Astrocyte of the cerebellum (primary cell): ENCODE measurements at regions of chr7 and their contacts with region 1.

Region 1: GRCh38 chr7:108384721-108385481 is 71.3 kb downstream of the NRCAM start:
- DNase-seq: no peak
- H3K4me3 ChIP-seq: no peak overlapping the region
- CTCF ChIP-seq: peak; percentile 5

Region 2: GRCh38 chr7:108294595-108294994 is 90.3 kb before region 1 on chr7:
- in situ Hi-C with region 1: no loop called
- DNase-seq: no peak
- H3K4me3 ChIP-seq: no peak overlapping the region
- CTCF ChIP-seq: no peak

Region 3: DNA sequence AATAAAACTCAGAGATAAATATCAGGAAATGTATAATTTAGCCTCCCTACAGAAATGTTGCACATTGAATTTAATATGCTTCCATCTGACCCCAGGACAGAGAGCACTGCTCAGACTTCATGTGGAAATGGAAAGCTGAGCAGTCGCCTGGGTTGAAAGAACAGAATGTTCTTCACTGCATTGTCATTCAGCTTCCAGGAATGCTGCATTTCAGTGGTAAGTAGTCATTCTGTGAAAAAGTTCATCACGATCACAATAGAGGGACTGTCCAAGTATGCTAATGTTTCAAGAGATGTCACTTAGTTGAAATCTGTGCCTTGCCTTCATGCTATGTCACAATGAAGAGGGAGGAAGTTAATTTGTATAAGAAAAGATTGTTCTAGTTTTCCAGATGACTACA is 76.0 kb before region 1 on chr7:
- in situ Hi-C with region 1: loop called (anchors 5 kb)
- DNase-seq: peak; percentile 19
- H3K4me3 ChIP-seq: no peak overlapping the region
- CTCF ChIP-seq: no peak

Region 4: DNA sequence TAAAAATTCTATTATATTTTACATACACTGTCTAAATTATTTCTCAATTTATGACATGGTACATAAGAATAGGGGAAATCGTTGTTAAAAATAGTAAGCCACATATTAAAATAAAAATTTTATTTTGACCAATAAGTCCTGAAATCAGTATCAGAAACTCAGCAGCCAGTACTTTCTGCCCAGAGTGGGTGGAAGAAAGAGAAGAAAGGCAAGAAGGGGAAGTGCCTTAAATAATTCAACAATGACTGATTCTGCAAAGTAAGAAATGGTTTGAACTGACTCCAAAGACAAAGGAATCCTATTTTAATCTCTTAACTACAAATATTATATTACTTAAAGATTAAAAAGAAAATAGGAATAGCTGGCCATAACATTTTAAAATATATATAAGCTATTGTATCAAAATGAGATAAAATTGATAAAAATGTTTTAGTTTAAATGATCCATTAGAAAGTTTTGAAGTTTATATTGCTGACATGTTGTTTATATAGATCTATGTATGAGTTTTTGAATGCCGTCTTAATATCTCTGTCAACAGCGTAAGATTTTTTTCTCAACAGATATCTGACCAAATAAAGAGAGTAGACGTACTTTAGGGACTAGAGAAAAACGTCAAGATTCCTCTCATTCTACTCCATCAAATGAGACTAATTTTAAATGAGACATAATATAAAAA is 101.5 kb after region 1 on chr7:
- in situ Hi-C with region 1: no loop called
- DNase-seq: no peak
- H3K4me3 ChIP-seq: no peak overlapping the region
- CTCF ChIP-seq: no peak